Right cardiac atrium (tissue), 5 donors: ENCODE measurements at regions of chr9 and their contacts with region 1.

Region 1: DNA sequence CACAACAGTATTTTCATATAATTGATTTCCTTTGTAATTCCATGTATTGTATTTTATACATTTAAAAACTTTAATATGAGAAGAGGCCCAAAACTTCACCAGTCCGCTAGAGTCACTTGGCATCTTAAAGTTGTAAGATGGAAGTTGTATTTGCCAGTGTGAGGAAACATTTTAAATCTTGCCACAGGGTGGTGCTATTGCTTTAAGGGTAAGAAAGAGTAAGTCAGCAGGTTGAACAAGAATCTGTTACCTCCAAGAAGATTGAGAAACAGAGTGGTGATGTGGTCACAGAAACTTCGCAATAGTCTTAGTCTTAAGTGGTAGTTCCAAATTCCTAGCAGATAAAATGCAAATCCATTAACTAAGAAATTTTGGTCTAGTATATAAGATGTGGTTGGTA is 39.8 kb upstream of the RANBP6 start:
- DNase-seq: no peak
- ATAC-seq: peak; percentile 59 to 74
- H3K4me3 ChIP-seq: no peak overlapping the region
- H3K27ac ChIP-seq: no peak overlapping the region
- H3K4me1 ChIP-seq: no peaks in the 10 kb centered on the region
- H3K27me3 ChIP-seq: no peaks in the 10 kb centered on the region

Region 2: DNA sequence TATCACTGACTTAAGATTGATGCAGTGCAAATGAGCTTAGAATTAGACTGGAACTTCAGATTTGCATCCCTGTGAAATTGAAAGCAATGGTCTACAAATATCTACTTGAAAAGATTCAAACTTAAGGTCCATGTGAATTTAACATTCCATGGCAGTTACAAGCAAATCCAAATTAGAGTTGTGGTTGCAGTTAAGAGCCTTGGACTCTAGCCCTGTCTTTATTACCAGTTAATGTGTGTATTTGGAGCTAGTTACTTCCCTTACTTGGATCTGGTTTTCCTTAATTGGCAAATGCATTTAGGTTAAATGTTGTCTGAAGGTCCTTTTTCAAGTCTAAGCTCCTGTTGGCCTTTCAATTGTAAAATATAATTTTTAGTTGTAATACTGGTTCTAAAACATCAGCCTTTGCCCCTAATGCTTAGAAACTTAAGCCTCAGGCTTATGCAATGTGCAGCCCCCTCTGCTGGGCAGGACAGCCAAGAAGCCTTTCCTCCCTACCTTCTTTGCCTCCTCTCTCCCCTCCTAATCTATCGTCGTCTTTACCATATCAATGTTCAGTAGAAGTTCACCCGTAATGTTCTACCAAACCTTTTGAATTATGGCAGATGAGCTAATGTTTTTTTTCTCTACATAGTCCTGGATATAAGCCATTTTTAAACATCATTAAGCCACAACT is 281.8 kb before region 1 on chr9:
- intact Hi-C with region 1: no loop called
- DNase-seq: no peak
- ATAC-seq: no peak
- H3K4me3 ChIP-seq: no peak overlapping the region
- H3K27ac ChIP-seq: no peak overlapping the region
- H3K4me1 ChIP-seq: no peaks in the 10 kb centered on the region
- H3K27me3 ChIP-seq: no peaks in the 10 kb centered on the region

Region 3: GRCh38 chr9:5886114-5886939 is 168.9 kb before region 1 on chr9:
- intact Hi-C with region 1: loop called in 3 of 4 experiments (anchors 2 to 5 kb)
- DNase-seq: peak; percentile 68 to 87 (median 86)
- ATAC-seq: peak; percentile 86 to 90
- H3K4me3 ChIP-seq: no peak overlapping the region
- H3K27ac ChIP-seq: no peak overlapping the region
- H3K4me1 ChIP-seq: no peaks in the 10 kb centered on the region
- H3K27me3 ChIP-seq: no peaks in the 10 kb centered on the region